PC-9 (cell line): ENCODE measurements at regions of chr19 and their contacts with region 1.

Region 1: GRCh38 chr19:55166530-55167268 is at the start of gene DNAAF3:
- DNase-seq: peak; percentile 96 to 99
- H3K4me3 ChIP-seq: peak within 1 kb of the TSS; percentile 70
- H3K27ac ChIP-seq: peak within 1 kb of the TSS; percentile 71
- H3K4me1 ChIP-seq: peaks cover 13% of the 10 kb centered on the region
- H3K27me3 ChIP-seq: no peaks in the 10 kb centered on the region
- CTCF ChIP-seq: no peak
- total RNA-seq, gene DNAAF3: 51.8 and 76.6 TPM in 2 replicates

Region 2: GRCh38 chr19:55018216-55018615 is 148.5 kb before region 1 on chr19:
- CTCF ChIA-PET with region 1: no interaction called
- POLR2A ChIA-PET with region 1: no interaction called
- intact Hi-C with region 1: no loop called
- DNase-seq: no peak
- H3K4me3 ChIP-seq: no peak overlapping the region
- H3K27ac ChIP-seq: no peak overlapping the region
- H3K4me1 ChIP-seq: no peaks in the 10 kb centered on the region
- H3K27me3 ChIP-seq: no peaks in the 10 kb centered on the region
- CTCF ChIP-seq: no peak

Region 3: DNA sequence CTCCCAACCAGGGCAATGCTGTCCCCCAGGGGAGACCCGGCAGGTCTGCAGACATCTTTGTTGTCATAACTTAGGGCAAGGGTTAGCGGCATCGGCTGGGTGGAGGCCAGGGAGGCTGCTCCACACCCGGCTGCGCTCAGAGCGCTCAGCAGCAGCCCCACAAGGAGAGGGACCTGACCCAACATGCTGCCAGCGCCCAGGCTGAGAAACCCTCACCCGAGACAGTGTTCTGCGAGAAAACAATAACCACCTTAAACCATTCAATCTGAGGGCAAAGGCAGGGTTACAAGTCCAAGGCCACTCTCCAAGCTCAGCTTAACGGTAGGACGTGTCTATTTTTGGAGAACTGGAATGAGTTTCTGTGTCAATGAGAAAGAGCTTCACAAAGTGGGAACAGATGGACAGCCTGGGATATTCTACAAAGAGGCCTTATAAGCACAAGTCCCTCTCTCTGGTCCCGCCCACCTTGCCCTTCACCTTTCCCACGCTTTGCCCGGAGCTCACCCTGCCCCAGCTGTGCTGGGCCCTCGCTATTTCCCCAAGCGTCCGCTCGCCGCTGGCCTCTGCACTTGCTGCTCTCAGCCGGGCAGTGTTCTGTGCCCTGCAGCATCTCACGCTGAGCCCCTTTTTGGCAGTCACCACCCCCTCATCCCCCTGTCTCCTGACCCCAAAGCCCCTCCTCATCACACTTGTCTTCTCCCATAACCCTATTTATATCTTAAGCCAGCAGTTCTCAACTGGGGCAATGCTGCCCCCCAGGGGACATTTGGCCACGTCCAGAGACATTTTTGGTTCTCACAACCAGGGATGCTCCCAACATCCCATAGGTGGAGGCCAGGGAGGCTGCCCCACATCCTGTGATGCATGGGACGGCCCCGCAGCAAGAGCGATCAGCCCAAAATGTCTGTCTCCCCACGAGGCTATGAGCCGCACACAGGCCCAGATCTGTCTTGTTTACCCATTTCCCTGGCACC is 66.9 kb before region 1 on chr19:
- CTCF ChIA-PET with region 1: no interaction called
- POLR2A ChIA-PET with region 1: no interaction called
- intact Hi-C with region 1: no loop called
- DNase-seq: no peak
- H3K4me3 ChIP-seq: no peak overlapping the region
- H3K27ac ChIP-seq: no peak overlapping the region
- H3K4me1 ChIP-seq: no peaks in the 10 kb centered on the region
- H3K27me3 ChIP-seq: no peaks in the 10 kb centered on the region
- CTCF ChIP-seq: peak; percentile 53

Region 4: DNA sequence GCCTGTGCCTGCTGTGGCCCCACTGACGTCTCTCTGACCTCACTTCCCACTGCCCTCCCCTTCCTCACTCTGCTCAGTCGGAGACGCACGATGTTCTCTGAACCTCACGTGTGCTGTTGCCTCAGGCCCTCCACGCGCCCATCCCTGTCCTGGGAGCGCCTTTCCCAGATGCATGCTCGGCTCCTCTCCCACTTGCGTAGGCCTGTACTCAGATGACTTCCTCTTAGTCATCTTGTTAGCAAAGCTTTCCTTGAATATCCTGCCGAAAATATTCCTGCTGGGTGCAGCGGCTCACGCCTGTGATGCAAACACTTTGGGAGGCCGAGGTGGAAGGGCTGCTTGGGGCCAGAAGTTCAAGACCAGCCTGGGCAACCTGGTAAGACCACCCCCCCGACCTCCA is 22.7 kb after region 1 on chr19:
- CTCF ChIA-PET with region 1: interaction called, 3 read pairs
- POLR2A ChIA-PET with region 1: no interaction called
- intact Hi-C with region 1: loop called (anchors 2 kb)
- DNase-seq: peak; percentile 90 to 91
- H3K4me3 ChIP-seq: no peak overlapping the region
- H3K27ac ChIP-seq: peak overlapping the region; percentile 75
- H3K4me1 ChIP-seq: peaks cover 15% of the 10 kb centered on the region; the same call in 1 of the 2 replicates
- H3K27me3 ChIP-seq: no peaks in the 10 kb centered on the region
- CTCF ChIP-seq: no peak

Region 5: GRCh38 chr19:55258828-55259539 is 92.3 kb after region 1 on chr19 and contains the start of gene PPP6R1:
- CTCF ChIA-PET with region 1: interaction called, 8 read pairs
- POLR2A ChIA-PET with region 1: interaction called, 10 read pairs
- intact Hi-C with region 1: loop called (anchors 1 kb)
- DNase-seq: peak; percentile 99 to 100
- H3K4me3 ChIP-seq: peak within 1 kb of the TSS; percentile 77
- H3K27ac ChIP-seq: peak within 1 kb of the TSS; percentile 86
- H3K4me1 ChIP-seq: peaks cover 42% of the 10 kb centered on the region
- H3K27me3 ChIP-seq: no peaks in the 10 kb centered on the region
- CTCF ChIP-seq: no peak
- total RNA-seq, gene PPP6R1: 136 and 159 TPM in 2 replicates

Region 6: DNA sequence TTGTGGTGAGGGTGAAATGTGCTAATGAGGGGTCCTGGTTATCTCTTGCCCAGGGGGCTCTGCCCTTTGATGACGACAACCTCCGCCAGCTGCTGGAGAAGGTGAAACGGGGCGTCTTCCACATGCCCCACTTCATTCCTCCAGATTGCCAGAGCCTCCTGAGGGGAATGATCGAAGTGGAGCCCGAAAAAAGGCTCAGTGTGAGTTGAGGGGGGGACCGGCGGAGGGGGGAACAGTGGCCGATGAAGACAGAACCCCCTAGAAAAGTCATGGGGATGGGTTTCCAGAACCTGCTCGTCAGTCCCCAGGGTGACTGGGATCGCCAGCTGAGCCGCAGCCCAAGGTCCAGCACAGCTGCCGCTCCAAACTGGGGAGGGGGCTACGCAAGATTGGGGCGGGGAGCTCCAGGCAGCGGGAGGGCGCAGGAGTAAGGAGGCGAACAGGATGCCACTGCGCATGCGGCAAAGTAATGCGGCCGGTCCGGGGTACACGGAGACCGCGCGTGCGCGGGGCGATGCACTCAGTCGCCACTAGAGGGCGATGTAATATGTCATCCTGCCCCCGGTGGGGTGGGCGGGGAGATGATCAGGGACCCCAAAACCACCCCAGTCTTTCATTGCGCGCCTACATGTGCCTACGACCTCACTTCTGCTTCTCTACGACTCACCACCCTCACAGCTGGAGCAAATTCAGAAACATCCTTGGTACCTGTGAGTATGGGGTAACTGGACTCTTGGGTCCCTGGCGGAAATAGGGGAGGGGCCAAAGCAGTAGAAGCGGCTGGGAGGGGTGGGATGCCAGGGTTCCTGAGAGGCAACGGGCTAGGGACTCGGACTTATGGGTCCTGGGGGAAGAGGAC is 135.0 kb after region 1 on chr19:
- CTCF ChIA-PET with region 1: interaction called, 12 read pairs
- POLR2A ChIA-PET with region 1: no interaction called
- intact Hi-C with region 1: no loop called
- DNase-seq: peak; percentile 49 to 94
- H3K4me3 ChIP-seq: peak overlapping the region; percentile 55
- H3K27ac ChIP-seq: no peak overlapping the region
- H3K4me1 ChIP-seq: 0 out of 2 replicates have a peak, but pooled peaks cover 4% of the 10 kb centered on the region
- H3K27me3 ChIP-seq: no peaks in the 10 kb centered on the region
- CTCF ChIP-seq: peak; percentile 100

Region 7: GRCh38 chr19:55407800-55408532 is 241.3 kb after region 1 on chr19:
- CTCF ChIA-PET with region 1: no interaction called
- POLR2A ChIA-PET with region 1: interaction called, 9 read pairs
- intact Hi-C with region 1: loop called (anchors 5 kb)
- DNase-seq: peak; percentile 95 to 98
- H3K4me3 ChIP-seq: peak overlapping the region; percentile 63
- H3K27ac ChIP-seq: peak overlapping the region; percentile 86
- H3K4me1 ChIP-seq: peaks cover 21% of the 10 kb centered on the region
- H3K27me3 ChIP-seq: no peaks in the 10 kb centered on the region
- CTCF ChIP-seq: no peak